ENCODE measurements at regions of chr15 and their contacts with region 1.

Region 1: GRCh38 chr15:68704496-68705021 is 116.1 kb downstream of the ANP32A start:
- DNase-seq: no peak
- H3K4me3 Mint-ChIP-seq: no peak overlapping the region
- H3K27ac Mint-ChIP-seq: no peak overlapping the region
- H3K4me1 Mint-ChIP-seq: no peaks in the 10 kb centered on the region
- H3K27me3 Mint-ChIP-seq: peaks cover 9% of the 10 kb centered on the region

Region 2: GRCh38 chr15:68672781-68673205 is 31.8 kb before region 1 on chr15:
- CTCF ChIA-PET with region 1: interaction called, 12 read pairs
- intact Hi-C with region 1: no loop called
- DNase-seq: no peak
- H3K4me3 Mint-ChIP-seq: no peak overlapping the region
- H3K27ac Mint-ChIP-seq: no peak overlapping the region
- H3K4me1 Mint-ChIP-seq: peaks cover 3% of the 10 kb centered on the region
- H3K27me3 Mint-ChIP-seq: peaks cover 11% of the 10 kb centered on the region

Region 3: GRCh38 chr15:68783226-68784058 is 78.9 kb after region 1 on chr15:
- CTCF ChIA-PET with region 1: no interaction called
- intact Hi-C with region 1: no loop called
- DNase-seq: peak; percentile 71
- H3K4me3 Mint-ChIP-seq: no peak overlapping the region
- H3K27ac Mint-ChIP-seq: peak overlapping the region; percentile 81
- H3K4me1 Mint-ChIP-seq: peaks cover 39% of the 10 kb centered on the region
- H3K27me3 Mint-ChIP-seq: no peaks in the 10 kb centered on the region